ENCODE measurements at regions of chr2 and their contacts with region 1.

Region 1: GRCh38 chr2:157509744-157510143 is 65.9 kb upstream of the CYTIP start:
- DNase-seq: no peak
- H3K4me3 ChIP-seq: no peak overlapping the region
- H3K4me3 Mint-ChIP-seq: no peak overlapping the region
- H3K27ac Mint-ChIP-seq: no peak overlapping the region
- H3K4me1 ChIP-seq: no peaks in the 10 kb centered on the region
- H3K4me1 Mint-ChIP-seq: no peaks in the 10 kb centered on the region
- H3K27me3 ChIP-seq: no peaks in the 10 kb centered on the region
- H3K27me3 Mint-ChIP-seq: peaks cover 3% of the 10 kb centered on the region
- CTCF ChIP-seq: no peak

Region 2: DNA sequence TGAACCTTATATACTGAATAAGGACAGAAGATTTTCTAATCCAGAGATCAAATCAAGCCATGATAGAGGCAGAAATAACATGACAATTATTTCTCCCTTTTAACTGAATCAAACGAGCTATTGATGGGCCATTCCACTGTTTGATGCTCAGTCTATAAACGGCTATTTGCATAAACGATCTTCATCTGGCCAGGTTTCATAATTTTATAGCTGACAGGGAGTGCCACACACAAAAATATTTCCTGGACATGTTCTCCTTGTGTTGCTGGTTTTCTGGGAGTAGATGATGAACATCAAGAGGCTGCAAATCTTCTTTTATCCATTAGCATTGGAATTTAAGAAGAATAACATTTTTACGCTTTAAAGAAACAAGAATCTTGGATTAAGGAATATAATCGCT is 55.8 kb after region 1 on chr2:
- CTCF ChIA-PET with region 1: no interaction called
- POLR2A ChIA-PET with region 1: interaction called, 16 read pairs
- intact Hi-C with region 1: no loop called
- DNase-seq: no peak
- H3K4me3 ChIP-seq: no peak overlapping the region
- H3K4me3 Mint-ChIP-seq: no peak overlapping the region
- H3K27ac Mint-ChIP-seq: no peak overlapping the region
- H3K4me1 ChIP-seq: no peaks in the 10 kb centered on the region; the same call in 1 of the 2 replicates
- H3K4me1 Mint-ChIP-seq: no peaks in the 10 kb centered on the region
- H3K27me3 ChIP-seq: no peaks in the 10 kb centered on the region
- H3K27me3 Mint-ChIP-seq: no peaks in the 10 kb centered on the region
- CTCF ChIP-seq: no peak

Region 3: GRCh38 chr2:157592948-157593347 is 83.2 kb after region 1 on chr2:
- CTCF ChIA-PET with region 1: no interaction called
- POLR2A ChIA-PET with region 1: no interaction called
- intact Hi-C with region 1: loop called (anchors 1 kb)
- DNase-seq: no peak
- H3K4me3 ChIP-seq: no peak overlapping the region
- H3K4me3 Mint-ChIP-seq: no peak overlapping the region
- H3K27ac Mint-ChIP-seq: no peak overlapping the region
- H3K4me1 ChIP-seq: no peaks in the 10 kb centered on the region
- H3K4me1 Mint-ChIP-seq: no peaks in the 10 kb centered on the region
- H3K27me3 ChIP-seq: no peaks in the 10 kb centered on the region; the same call in 1 of the 2 replicates
- H3K27me3 Mint-ChIP-seq: peaks cover 16% of the 10 kb centered on the region
- CTCF ChIP-seq: peak; percentile 16 to 20